Ascending aorta (tissue), 2 donors: ENCODE measurements at regions of chr10 and their contacts with region 1.

Region 1: DNA sequence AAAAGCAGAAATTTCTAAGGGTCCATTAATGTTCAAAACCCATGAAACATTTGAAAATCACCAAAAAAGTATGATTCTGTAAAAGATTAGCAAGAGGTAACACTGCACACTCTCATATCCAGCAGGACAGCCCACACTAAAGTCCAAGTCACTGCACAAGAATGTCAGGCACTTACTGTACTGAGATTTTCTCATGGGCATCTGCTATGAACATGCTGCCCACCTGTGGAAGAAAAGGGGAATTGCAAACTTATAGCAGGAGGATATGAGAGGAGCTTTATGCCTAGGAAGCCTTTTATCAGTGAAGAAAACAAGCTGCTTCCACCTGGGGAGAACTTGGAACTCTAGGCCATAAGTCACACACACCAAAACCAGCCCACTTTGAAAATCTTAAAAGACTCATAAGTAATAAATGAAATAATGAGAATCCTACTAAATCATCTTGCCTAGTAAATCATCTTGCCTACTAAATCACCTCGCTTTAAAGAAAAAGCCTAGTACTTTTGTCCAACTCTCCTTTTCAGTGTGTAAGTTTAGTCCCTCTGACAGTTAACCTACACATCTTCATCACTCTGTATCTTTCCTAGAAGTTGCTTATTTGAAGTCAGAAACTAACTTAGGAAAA is 46.1 kb downstream of the ARMH3 start:
- DNase-seq: peak in 1 of 2 donors; percentile 71
- H3K4me3 ChIP-seq: no peak overlapping the region
- H3K27ac ChIP-seq: no peak overlapping the region
- H3K4me1 ChIP-seq: no peaks in the 10 kb centered on the region
- H3K27me3 ChIP-seq: no peaks in the 10 kb centered on the region
- CTCF ChIP-seq: peak; percentile 84 to 91 (median 86)

Region 2: GRCh38 chr10:101837748-101838147 is 172.2 kb before region 1 on chr10:
- intact Hi-C with region 1: loop called (anchors 2 kb)
- DNase-seq: peak in 1 of 2 donors; percentile 9
- H3K4me3 ChIP-seq: no peak overlapping the region
- H3K27ac ChIP-seq: no peak overlapping the region
- H3K4me1 ChIP-seq: peaks cover 4 to 14% of the 10 kb centered on the region in 2 donors
- H3K27me3 ChIP-seq: no peaks in the 10 kb centered on the region
- CTCF ChIP-seq: no peak

Region 3: GRCh38 chr10:101889256-101890210 is 120.4 kb before region 1 on chr10:
- intact Hi-C with region 1: loop called (anchors 1 kb)
- DNase-seq: peak in 1 of 2 donors; percentile 70
- H3K4me3 ChIP-seq: no peak overlapping the region
- H3K27ac ChIP-seq: no peak overlapping the region
- H3K4me1 ChIP-seq: no peaks in the 10 kb centered on the region
- H3K27me3 ChIP-seq: no peaks in the 10 kb centered on the region
- CTCF ChIP-seq: peak; percentile 22 to 69 (median 65)